Heart left ventricle (tissue), 16 donors: ENCODE measurements at regions of chr5 and their contacts with region 1.

Region 1: DNA sequence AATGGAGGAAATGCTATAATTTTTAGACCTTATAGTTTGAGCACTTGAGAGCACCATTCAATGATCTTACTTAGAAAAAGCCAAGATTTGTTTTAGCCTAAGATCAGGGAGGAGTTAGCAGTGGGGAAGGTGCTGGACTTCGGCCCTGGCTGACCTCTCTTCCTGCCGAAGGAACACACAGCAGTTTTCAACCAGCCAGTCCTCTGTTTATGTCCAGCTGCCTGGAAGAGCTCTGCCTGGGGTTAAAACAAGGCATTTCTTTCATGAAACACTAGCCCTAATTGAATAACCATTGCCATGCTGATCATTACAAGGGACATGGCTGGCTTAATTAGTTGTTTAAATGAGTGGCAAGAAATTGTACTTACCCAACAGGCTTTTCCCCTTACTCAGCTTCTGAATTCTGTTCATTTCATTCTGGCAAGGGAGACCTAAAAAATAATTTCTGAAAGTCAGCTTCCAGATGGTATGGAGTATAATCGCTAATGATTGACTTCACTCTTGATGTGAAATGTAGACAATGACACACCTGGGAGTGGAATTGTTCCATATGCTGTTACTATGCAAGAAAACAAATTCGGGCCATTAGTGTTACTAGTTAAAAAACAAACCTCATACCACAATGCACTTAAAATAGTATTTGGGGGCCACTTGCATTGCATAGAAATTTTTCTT is 514.2 kb downstream of the SPOCK1 start:
- DNase-seq: no peak
- ATAC-seq: peak; percentile 47 to 58 (median 48)
- H3K4me3 ChIP-seq: no peak overlapping the region
- H3K27ac ChIP-seq: peak overlapping the region in 5 of 12 donors; percentile 29 to 71 (median 41)
- H3K4me1 ChIP-seq: peaks cover 0 to 22% (median 15%) of the 10 kb centered on the region in 12 donors
- H3K27me3 ChIP-seq: no peaks in the 10 kb centered on the region
- CTCF ChIP-seq: no peak
- POLR2A ChIP-seq: no peak

Region 2: GRCh38 chr5:136811551-136811950 is 173.4 kb before region 1 on chr5:
- intact Hi-C with region 1: loop called in 3 of 10 experiments (anchors 10 kb)
- DNase-seq: peak in 1 of 5 donors; percentile 52
- ATAC-seq: peak in 2 of 4 donors; percentile 54 to 89
- H3K4me3 ChIP-seq: no peak overlapping the region
- H3K27ac ChIP-seq: peak overlapping the region in 2 of 12 donors; percentile 11 to 38
- H3K4me1 ChIP-seq: peaks cover 0 to 28% (median 16%) of the 10 kb centered on the region in 12 donors
- H3K27me3 ChIP-seq: no peaks in the 10 kb centered on the region
- CTCF ChIP-seq: no peak
- POLR2A ChIP-seq: no peak

Region 3: DNA sequence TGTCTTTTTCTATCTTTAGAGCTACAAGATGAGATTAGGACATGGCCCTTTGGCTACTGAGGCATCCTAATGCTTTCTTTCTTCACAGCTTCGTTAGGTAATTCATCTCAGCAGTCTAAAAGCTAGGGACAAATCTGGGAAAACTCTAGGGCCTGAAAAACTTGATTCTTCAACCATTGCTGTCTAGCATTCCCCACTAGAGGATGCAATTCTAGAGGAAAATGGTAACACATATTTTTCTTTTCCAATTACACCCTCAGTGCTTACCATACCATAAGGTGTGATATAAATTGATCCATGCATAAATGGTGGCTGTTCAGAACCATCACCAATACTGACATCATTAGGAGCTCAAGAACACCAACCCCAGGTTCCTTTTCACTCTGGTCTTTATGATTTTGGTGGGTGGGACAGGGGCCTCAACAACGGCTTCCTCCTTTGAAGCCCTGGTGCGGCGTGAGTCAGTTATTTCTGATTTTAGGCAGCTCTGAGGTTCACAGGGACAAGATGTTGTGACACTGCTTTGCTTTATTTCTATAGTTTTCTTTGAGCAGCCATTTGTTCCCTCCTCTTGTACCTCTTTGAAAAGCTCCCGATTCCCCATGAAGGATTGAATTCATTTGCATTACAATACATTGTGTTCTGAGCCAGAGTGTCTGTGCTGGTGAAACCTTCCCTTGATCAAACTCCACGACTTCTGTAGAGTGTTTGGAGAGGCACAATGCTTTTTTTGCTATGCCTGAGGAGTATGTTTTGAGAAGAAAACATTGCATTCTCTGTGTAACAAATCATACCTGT is 93.5 kb before region 1 on chr5:
- intact Hi-C with region 1: loop called in 1 of 10 experiments (anchors 5 kb)
- DNase-seq: no peak
- ATAC-seq: no peak
- H3K4me3 ChIP-seq: no peak overlapping the region
- H3K27ac ChIP-seq: no peak overlapping the region
- H3K4me1 ChIP-seq: peaks cover 0 to 4% (median 0%) of the 10 kb centered on the region in 12 donors
- H3K27me3 ChIP-seq: no peaks in the 10 kb centered on the region
- CTCF ChIP-seq: no peak
- POLR2A ChIP-seq: no peak

Region 4: DNA sequence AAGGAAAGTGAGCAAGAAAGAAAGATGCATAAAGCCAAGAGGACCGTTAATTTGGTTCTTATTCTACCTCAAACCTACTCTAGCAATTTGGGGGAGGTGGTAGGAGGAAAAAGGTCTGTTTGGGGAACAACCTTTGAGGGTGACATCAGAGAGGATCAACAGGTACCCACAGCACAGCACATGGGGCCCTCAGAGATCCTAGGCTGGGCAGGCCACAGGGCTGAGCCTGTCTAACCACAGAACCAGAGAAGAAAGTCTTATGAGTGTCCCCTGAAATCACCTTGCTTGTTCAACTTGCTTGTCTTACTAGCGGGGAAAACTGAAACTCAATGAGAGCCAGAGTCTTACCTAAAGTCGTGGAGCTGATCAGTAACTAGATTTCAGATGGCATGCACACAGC is 129.0 kb after region 1 on chr5:
- intact Hi-C with region 1: no loop called
- DNase-seq: no peak
- ATAC-seq: no peak
- H3K4me3 ChIP-seq: no peak overlapping the region
- H3K27ac ChIP-seq: no peak overlapping the region
- H3K4me1 ChIP-seq: no peaks in the 10 kb centered on the region
- H3K27me3 ChIP-seq: no peaks in the 10 kb centered on the region
- CTCF ChIP-seq: no peak
- POLR2A ChIP-seq: no peak